Dendritic cell treated with granulocyte-macrophage colony-stimulating factor and Interleukin-4, amounts not matched to agents 40 ng/mL and 50 ng/mL, for 4 days (primary cell): ENCODE measurements at regions of chr7 and their contacts with region 1.

Region 1: DNA sequence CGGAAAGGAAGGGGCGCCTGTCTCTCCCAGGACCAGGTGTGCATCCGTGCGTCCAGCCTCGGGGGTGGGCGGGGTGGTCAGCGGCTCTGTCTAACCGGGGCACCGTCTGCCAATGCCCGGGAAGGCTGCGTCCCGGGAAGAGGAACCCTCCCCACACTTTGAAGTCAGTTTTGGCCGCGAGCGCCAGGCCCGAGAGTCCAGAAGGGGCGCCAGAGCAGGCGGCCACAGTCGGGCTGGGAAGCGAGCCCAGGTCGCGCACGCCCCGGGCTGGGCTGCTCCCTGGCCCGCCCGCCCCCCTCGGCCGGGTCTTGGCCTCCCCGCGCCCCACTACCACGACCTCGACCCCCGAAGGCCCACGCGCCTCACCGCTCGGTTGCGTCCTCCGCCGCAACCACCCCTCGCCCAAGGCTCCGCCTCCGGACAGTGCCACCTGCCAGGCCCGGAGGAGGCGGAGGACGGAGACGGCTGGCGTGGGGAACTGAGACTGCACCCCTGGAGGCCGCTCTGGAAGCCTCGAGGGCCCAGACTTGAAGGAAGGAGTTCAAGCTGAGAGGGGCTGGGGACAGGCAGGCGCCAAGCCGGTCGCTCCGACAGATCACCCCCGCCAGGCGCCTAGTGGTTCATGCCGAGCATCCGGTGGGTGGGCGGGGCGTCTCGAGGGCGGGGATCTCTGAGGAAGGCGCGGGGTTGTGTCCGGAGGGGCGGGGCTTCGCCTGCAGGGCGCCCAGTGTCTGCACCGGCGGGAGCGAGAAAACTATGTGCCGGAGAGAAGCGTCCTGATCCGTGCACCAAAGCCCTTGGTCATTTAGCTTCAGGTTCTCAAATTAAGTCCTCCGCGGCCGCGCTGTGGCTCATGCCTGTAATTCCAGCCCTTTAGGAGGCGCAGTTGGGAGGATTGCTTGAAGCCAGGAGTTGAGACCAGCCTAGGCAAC is at the start of gene BRAT1:
- H3K4me3 Mint-ChIP-seq: peak within 1 kb of the TSS; percentile 86
- H3K27ac Mint-ChIP-seq: peak within 1 kb of the TSS; percentile 97
- H3K4me1 Mint-ChIP-seq: peaks cover 53% of the 10 kb centered on the region
- H3K27me3 Mint-ChIP-seq: no peaks in the 10 kb centered on the region

Region 2: DNA sequence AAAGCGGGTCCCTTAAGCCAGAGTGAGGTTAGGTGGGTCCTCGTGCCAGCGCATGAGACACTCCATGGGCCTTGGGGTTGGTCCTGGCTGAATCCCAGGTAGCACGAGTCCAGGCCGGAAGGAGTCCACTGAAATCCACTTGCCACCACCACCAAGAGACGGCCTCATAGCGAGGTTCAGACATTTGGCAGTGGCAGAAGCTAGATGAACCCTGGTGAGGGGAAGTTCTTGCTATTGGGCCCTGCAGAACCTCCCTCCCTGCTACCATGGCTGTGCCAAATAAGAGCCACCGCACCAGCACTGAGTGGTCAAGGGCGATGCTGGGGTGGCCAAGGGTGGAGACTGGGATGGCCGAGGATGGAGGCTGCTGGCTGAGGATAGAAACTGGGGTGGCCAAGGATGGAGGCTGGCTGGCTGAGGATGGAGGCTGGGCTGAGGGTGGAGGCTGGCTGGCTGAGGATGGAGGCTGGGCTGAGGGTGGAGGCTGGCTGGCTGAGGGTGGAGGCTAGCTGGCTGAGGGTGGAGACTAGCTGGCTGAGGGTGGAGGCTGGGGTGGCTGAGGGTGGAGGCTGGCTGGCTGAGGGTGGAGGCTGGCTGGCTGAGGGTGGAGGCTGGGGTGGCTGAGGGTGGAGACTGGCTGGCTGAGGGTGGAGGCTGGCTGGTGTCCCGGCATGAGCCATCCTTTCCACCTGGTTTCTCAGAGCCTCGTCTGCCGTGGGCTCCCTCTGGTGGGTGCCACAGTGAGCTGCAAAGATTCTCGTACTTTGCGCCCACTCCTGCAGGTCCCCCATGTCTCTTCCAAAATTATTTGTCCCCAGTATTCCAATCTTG is 797.1 kb before region 1 on chr7:
- intact Hi-C with region 1: no loop called
- H3K4me3 Mint-ChIP-seq: no peak overlapping the region
- H3K27ac Mint-ChIP-seq: no peak overlapping the region
- H3K4me1 Mint-ChIP-seq: no peaks in the 10 kb centered on the region
- H3K27me3 Mint-ChIP-seq: peaks cover 10% of the 10 kb centered on the region

Region 3: DNA sequence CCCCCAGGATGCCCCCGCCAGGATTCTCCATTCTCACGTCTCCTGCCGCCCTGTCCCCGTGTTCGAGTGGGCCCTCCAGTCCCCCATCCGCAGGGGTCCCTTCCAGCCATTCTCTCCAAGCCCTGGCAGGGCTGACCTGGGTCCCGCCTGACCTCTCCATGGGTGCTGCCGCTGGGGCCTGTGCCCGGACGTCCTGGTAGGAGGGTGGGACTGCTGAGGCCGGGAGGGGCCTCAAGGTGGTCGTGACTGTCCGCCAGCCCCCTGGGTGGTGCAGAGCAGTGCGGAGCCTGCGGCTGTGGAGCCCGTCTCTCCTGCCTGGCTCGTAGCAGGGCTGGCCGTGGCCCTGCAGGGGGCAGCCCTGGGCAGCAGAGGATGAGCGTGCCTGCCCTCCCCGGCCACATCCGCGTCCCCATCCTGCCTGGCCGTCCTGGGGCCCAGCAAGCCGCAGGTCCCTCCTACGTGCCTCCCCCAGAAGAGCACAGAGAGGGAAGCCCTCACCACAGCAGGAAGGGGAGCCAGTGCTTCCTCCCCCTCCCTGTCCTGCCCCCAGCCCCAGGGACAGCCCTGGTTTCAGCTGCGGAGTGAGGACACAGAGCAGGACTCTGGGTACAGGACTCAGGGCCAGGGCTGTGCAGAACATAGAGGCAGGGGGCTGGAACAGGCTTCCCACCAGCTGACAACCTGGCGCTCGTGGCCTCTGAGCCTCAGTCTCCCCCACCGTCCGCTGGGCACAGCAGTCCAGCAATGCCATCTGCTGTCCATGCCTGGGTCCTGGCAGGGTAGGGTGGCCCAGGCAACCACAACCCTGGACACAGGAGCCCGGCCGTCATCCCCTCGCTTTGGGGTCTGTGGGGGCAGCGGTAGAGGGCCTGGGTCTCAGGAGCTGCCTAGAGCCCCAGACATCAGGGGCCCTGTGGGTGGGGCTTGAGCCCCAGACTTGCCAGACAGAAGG is 77.7 kb before region 1 on chr7:
- intact Hi-C with region 1: loop called (anchors 5 kb)
- H3K4me3 Mint-ChIP-seq: no peak overlapping the region
- H3K27ac Mint-ChIP-seq: peak overlapping the region; percentile 45
- H3K4me1 Mint-ChIP-seq: peaks cover 19% of the 10 kb centered on the region
- H3K27me3 Mint-ChIP-seq: peaks cover 53% of the 10 kb centered on the region

Region 4: GRCh38 chr7:2519119-2519930 is 36.1 kb before region 1 on chr7 and contains the start of gene LFNG:
- intact Hi-C with region 1: loop called (anchors 5 kb)
- H3K4me3 Mint-ChIP-seq: peak within 1 kb of the TSS; percentile 100
- H3K27ac Mint-ChIP-seq: peak within 1 kb of the TSS; percentile 87
- H3K4me1 Mint-ChIP-seq: peaks cover 54% of the 10 kb centered on the region
- H3K27me3 Mint-ChIP-seq: peaks cover 8% of the 10 kb centered on the region

Region 5: DNA sequence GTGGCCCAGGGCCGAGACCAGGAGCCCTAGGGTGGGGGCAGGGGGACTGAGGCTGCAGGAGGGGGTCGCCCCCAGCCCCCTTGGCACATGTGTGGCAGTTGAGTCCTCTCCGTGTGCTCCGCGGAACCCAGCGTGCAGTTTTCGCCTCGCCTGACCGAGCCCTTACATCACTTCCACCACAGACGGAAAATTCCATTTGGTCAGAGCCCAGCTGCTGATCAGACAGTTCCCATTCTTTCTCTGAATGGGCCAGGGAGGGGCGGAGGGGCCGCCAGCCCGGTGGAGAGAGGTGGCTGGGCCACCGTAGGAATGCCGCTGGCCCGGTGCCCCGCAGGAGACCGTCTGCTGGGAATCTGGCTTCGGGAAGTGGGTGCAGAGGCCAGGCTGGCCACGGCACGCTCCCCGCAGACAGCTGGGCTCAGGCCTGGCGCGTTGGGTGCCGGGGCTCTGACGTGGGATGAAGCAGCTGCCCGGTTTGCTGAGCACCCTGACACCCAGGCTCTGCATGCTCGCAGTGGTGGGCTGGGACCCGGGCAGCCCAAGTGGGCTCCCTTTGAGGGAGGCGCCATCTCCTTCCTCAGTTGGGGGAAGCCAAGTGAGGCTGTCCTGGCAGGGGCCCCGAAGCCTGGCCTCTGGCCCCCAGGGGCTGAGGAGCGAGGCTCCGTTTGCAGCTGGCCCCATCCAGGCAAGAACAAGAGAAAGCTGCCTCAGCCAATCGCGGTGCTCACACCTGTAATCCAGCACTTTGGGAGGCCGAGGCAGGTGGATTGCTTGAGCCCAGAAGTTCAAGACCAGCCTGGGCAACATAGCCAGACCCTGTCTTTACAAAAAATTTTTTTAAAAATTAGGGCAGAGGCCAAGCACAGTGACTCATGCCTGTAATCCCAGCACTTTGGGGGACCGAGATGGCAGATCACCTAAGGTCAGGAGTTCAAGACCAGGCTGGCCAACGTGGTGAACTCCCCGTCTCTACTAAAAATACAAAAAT is 86.3 kb after region 1 on chr7:
- intact Hi-C with region 1: loop called (anchors 5 kb)
- H3K4me3 Mint-ChIP-seq: peak overlapping the region; percentile 67
- H3K27ac Mint-ChIP-seq: peak overlapping the region; percentile 100
- H3K4me1 Mint-ChIP-seq: peaks cover 89% of the 10 kb centered on the region
- H3K27me3 Mint-ChIP-seq: no peaks in the 10 kb centered on the region